ENCODE measurements at regions of chr6 and their contacts with region 1.

Region 1: DNA sequence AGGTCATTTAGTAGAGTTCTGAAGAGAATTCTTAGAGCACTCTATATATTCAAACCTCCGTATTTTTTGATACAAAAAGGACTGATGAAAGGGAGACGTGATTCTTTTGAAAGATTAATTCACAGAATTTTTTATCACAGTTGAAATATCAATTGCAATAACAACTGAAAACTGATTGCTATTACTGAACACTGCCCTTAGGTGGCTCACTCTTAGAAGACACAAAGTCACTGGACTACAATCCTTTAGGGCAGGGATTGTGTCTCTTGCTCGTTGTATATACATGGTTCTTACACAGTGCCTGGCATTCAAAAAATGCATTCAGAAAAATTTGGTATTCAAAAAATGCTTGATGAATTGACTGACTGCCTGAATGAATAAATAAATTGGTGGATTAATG is 17.1 kb upstream of the CALHM6 start:
- DNase-seq: no peak
- ATAC-seq: peak in 1 of 2 donors; percentile 66

Region 2: DNA sequence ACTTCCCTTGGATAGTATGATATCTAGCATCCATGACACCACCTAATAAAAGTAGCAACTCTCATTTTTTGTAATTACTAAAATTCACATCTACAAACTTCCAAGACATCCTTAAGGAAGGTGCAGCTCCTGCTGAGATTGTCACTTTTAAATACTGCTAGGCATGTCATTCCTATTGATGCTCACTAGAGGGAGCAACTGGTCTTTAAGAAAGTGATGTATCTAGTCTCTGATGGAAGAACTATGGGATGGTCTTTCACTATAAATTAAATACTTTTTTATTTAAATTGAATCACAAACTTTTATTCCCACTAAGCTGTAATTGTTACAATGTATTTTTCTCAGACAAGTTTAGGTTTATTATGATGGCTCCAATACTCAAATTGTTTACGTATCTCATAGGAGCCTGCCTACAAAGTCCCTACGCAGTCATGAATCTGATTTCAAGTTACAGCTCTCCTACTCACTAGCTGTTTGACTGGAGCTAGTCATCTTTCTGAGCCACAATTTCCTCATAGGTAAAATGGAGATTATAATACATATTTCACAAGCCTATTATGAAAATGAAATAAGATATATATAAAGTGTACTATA is 156.3 kb before region 1 on chr6:
- intact Hi-C with region 1: loop called in 1 of 2 experiments (anchors 5 kb)
- DNase-seq: no peak
- ATAC-seq: peak in 1 of 2 donors; percentile 71

Measured in left cardiac atrium (tissue), 4 donors.